Spleen (tissue), 13 donors: ENCODE measurements at regions of chr12 and their contacts with region 1.

Region 1: DNA sequence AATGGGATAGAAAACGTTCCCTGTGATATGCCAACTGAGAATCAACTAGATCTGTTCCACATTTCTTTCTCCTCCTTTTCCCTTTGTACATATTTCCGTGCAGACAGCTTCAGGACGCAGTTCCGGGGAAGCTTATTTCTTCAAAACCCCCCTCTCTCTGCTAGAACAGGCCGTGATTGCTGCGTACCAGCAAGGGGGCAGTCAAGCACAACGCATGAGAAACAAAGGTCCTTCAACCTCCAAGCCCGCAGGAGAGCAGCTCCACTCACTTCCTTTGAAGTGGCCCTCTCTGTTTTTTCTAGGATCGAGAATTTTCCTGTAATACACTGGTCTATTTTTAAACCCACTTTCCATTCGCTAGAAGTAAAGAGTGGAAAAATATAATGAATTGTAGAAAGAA is 80.8 kb downstream of the ZNF664 start:
- DNase-seq: no peak
- H3K4me3 ChIP-seq: no peak overlapping the region
- H3K27ac ChIP-seq: no peak overlapping the region
- H3K4me1 ChIP-seq: peaks cover 0 to 6% (median 0%) of the 10 kb centered on the region in 6 donors
- H3K27me3 ChIP-seq: no peaks in the 10 kb centered on the region
- CTCF ChIP-seq: peak; percentile 28 to 64 (median 54)
- POLR2A ChIP-seq: no peak

Region 2: GRCh38 chr12:123948796-123949769 is 104.8 kb before region 1 on chr12:
- intact Hi-C with region 1: no loop called
- DNase-seq: no peak
- H3K4me3 ChIP-seq: no peak overlapping the region
- H3K27ac ChIP-seq: no peak overlapping the region
- H3K4me1 ChIP-seq: peaks cover 0 to 10% (median 0%) of the 10 kb centered on the region in 6 donors
- H3K27me3 ChIP-seq: no peaks in the 10 kb centered on the region
- CTCF ChIP-seq: no peak
- POLR2A ChIP-seq: no peak

Region 3: DNA sequence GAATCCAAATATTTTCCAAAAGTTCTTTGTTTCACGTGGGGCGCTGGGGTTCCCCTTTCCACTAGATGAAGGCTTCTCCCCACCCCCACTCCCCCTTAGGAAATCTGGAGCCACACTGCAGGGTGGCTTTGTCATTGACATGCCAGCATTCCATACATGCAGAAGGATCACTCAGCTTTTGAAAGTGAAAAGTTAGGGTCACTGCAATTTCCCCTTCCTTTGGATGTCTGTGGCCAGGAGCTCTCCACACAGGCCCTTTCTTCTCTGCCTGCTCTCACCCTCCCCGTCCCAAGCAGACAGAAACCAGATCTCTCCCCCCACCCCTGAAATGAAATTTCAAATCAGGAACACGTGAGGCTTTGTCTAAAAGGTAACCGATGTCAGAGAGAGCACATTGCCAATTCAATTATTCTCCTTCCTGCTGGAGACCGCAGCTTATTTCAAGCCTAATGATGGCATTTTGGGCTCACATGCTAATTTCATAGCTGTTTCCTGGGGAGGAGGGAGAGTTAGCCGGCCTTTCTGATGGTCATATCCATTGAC is 87.2 kb after region 1 on chr12:
- intact Hi-C with region 1: no loop called
- DNase-seq: no peak
- H3K4me3 ChIP-seq: no peak overlapping the region
- H3K27ac ChIP-seq: no peak overlapping the region
- H3K4me1 ChIP-seq: no peaks in the 10 kb centered on the region
- H3K27me3 ChIP-seq: peaks cover 0 to 15% (median 0%) of the 10 kb centered on the region in 7 donors
- CTCF ChIP-seq: no peak
- POLR2A ChIP-seq: no peak

Region 4: GRCh38 chr12:124321040-124321481 is 267.2 kb after region 1 on chr12:
- intact Hi-C with region 1: loop called (anchors 5 kb)
- DNase-seq: peak; percentile 86
- H3K4me3 ChIP-seq: no peak overlapping the region
- H3K27ac ChIP-seq: no peak overlapping the region
- H3K4me1 ChIP-seq: no peaks in the 10 kb centered on the region
- H3K27me3 ChIP-seq: no peaks in the 10 kb centered on the region
- CTCF ChIP-seq: peak; percentile 71 to 93 (median 88)
- POLR2A ChIP-seq: no peak

Region 5: GRCh38 chr12:124379938-124380754 is 326.3 kb after region 1 on chr12:
- intact Hi-C with region 1: no loop called
- DNase-seq: peak; percentile 85
- H3K4me3 ChIP-seq: peak overlapping the region in 1 of 8 donors; percentile 7
- H3K27ac ChIP-seq: peak overlapping the region; percentile 69 to 85 (median 80)
- H3K4me1 ChIP-seq: peaks cover 25 to 85% (median 52%) of the 10 kb centered on the region in 6 donors
- H3K27me3 ChIP-seq: no peaks in the 10 kb centered on the region
- CTCF ChIP-seq: peak in 9 of 11 experiments; percentile 23 to 54 (median 46)
- POLR2A ChIP-seq: no peak

Region 6: DNA sequence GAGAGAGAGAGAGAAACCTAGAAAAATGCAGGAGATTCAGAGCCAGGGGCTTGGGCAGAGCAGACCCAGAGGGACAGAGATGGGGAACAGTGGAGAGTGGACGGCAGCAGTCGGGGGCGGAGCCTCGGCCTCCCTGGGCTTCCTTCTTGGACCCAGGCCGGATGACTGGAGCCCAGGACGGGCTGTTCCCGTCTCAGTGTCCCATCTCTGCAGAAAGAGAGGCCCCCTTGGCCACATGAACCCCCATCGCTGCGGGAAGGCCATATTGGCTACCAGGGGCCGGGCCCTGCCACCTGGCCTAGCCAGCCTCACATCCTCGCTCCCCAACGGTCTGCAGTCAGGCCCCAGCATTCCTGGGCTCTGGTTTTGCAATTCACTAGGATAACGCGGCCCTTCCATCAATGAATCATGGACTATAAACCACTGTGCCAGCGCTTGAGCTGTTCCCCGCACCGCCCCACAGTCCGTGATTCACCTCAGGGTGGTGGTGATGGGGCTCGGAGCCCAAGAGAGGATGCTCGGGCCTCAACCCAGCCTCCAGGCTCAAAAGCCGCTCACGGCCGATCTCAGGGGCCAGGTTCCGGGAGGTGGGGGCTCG is 357.5 kb after region 1 on chr12:
- intact Hi-C with region 1: no loop called
- DNase-seq: no peak
- H3K4me3 ChIP-seq: no peak overlapping the region
- H3K27ac ChIP-seq: peak overlapping the region in 3 of 8 donors; percentile 23 to 51 (median 48)
- H3K4me1 ChIP-seq: peaks cover 0 to 48% (median 26%) of the 10 kb centered on the region in 6 donors
- H3K27me3 ChIP-seq: no peaks in the 10 kb centered on the region
- CTCF ChIP-seq: no peak
- POLR2A ChIP-seq: no peak